ENCODE measurements at regions of chr6 and their contacts with region 1.

Region 1: GRCh38 chr6:31546962-31547726 is at the start of gene NFKBIL1:
- DNase-seq: peak; percentile 96
- ATAC-seq: peak; percentile 98
- total RNA-seq, gene NFKBIL1: 23.0 TPM

Region 2: DNA sequence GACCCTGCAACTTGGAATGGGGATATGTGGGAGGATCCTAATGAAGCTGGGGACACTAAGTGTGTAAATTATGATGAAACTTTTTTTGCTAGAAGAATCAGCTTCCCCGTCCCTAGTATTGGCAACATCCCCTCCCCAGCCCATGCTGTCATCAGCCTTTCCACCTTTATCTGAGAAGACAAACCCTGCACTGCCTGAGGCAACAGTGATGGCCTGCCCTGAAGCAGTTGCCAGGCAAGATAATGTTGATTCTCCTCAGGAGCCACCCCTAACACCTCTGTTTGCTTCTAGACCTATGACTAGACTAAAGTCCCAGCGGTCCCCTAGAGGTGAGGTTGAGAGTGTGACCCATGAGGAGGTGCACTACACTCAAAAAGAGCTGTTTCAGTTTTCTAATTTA is 116.7 kb before region 1 on chr6:
- intact Hi-C with region 1: no loop called
- DNase-seq: no peak
- ATAC-seq: no peak

Region 3: GRCh38 chr6:31597006-31597405 is 49.9 kb after region 1 on chr6:
- intact Hi-C with region 1: loop called (anchors 2 kb)
- DNase-seq: no peak
- ATAC-seq: peak; percentile 39